GM10248 (cell line): ENCODE measurements at regions of chr3 and their contacts with region 1.

Region 1: GRCh38 chr3:158659454-158660237 is 12.8 kb downstream of the LXN start:
- DNase-seq: peak; percentile 54
- CTCF ChIP-seq: peak; percentile 73

Region 2: GRCh38 chr3:158631991-158632390 is 27.7 kb before region 1 on chr3:
- CTCF ChIA-PET with region 1: no interaction called
- POLR2A ChIA-PET with region 1: no interaction called
- DNase-seq: no peak
- CTCF ChIP-seq: no peak

Region 3: DNA sequence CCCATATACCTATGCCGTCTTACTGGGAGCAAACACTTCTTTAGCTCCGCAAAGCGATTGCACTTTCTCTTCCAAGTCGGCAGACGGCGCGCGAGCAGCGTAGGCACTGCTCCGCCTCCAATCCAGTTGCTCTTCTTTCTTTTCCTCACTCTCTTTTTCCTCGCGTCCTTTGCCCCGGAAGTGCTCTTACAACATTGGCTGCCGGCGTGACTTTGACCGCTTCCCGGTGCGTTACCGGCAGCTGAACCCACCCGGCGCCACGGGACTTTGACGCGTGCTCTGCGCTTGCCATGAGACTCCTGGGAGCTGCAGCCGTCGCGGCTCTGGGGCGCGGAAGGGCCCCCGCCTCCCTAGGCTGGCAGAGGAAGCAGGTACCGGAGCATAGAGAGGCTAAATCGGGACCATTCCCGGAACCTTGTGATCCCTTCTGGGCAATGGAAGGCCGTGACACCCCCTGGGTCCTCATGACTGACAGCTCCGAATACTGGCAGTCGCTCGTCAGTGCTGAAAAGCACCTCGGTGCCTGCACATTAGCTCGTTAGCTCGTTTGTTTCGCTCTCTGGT is 15.2 kb before region 1 on chr3 and contains the start of gene GFM1:
- CTCF ChIA-PET with region 1: interaction called, 125 read pairs
- POLR2A ChIA-PET with region 1: interaction called, 7 read pairs
- DNase-seq: peak; percentile 91
- CTCF ChIP-seq: peak; percentile 98

Region 4: GRCh38 chr3:158672293-158673176 is 12.9 kb after region 1 on chr3 and contains the start of gene LXN:
- CTCF ChIA-PET with region 1: interaction called, 76 read pairs
- POLR2A ChIA-PET with region 1: interaction called, 3 read pairs
- DNase-seq: peak; percentile 93
- CTCF ChIP-seq: peak; percentile 80

Region 5: GRCh38 chr3:158683216-158683962 is 23.7 kb after region 1 on chr3:
- CTCF ChIA-PET with region 1: interaction called, 16 read pairs
- POLR2A ChIA-PET with region 1: no interaction called
- DNase-seq: no peak
- CTCF ChIP-seq: no peak

Region 6: DNA sequence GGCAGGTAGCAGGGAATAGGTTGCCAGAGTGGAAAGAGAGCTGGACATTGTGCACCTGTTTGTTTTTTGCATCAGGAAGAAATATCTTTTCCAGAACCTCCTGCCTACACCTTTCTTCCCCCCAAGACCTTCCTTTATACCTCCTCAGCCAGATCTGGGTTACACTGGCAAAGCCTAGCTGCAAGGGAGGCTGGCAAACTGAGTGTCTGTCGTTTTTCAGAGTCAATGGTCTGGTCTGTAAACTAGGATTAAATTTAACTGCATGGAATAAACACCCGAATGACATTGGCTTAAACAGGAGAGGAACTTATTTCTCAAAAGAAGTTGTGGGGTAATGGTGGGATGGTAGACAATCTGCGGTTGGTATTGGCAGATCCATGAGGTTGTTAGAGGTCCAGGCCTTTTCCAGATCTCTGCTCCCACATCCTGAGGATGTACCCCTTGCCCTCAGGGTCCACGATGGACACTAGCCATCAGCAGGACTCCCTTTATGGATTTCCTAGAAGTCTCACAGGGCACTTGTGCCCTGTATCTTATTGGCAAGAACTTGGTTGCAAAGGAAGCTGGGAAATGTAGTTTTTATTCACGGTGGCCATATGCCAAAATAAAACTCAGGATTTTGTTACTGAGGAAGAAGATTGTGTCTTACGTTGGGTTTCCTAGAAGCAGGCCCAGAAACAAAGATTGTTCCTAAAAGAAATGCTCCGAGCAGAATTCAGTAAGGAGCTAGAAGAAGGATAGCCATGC is 75.8 kb after region 1 on chr3:
- CTCF ChIA-PET with region 1: no interaction called
- POLR2A ChIA-PET with region 1: no interaction called
- DNase-seq: no peak
- CTCF ChIP-seq: no peak

Region 7: DNA sequence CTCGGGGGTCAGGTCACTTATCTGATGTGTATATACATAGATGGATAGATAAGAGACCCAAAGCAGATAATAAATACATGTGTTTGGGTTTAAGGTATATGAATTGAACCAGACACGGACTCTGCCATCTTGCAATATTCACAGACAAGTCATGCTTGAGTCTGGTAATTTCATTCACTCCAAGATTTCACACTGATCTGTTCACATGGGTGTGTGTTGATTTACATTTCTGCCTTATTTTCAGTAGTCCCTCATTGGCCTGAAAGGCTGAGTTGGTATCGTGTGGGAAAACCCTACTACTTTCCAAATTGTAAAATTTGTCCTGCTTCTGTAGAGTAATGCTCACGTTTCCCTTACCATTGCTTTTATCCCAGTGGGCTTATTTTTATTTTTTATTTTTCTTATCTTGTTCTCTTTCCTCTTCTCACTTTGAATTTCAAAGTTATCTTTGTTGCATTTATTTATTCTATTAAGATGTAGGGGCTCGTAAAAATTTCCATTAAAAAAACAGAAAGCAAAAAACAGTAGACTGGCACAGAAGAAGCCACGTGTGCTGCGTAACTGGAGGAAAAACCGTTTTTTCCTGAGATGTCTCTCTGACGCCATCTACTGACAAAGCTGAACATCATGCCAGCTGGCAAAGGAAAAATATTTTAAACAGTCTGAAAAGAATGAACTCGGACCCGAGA is 131.4 kb after region 1 on chr3:
- CTCF ChIA-PET with region 1: interaction called, 52 read pairs
- POLR2A ChIA-PET with region 1: no interaction called
- DNase-seq: peak; percentile 53
- CTCF ChIP-seq: peak; percentile 85

Region 8: DNA sequence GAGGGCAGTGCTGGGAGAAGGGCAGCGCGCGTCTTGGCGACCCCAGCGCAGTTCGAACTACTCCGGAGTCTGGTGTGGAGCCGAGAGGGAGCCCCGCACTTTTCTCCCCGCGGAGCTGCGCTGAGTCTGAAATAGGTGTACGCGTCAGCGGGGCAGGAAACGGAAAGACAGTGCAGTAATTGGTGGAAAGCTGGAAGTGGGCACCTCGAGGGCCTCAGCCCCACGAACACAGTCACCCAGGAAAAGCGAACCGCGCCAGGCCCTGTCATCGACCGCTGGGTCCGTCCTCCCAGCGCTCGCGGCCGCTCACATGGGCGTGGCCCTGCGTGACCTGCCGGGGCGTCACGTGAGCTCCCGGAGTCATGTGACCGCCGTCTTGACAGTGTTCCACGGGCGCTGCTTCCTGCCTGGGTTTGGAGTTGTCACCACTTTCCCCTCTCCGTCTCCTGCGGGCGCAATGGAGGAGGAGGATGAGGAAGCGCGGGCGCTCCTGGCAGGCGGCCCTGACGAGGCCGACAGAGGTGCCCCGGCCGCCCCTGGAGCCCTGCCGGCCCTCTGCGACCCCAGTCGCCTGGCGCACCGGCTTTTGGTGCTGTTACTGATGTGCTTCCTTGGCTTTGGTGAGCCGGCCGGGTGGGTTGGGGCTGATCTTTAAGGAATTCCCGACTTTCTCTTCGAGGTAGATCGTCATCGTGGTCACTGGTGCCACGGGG is 142.2 kb after region 1 on chr3 and contains the start of gene MFSD1:
- CTCF ChIA-PET with region 1: interaction called, 16 read pairs
- POLR2A ChIA-PET with region 1: no interaction called
- DNase-seq: peak; percentile 93
- CTCF ChIP-seq: no peak